ENCODE measurements at regions of chr6 and their contacts with region 1.

Region 1: DNA sequence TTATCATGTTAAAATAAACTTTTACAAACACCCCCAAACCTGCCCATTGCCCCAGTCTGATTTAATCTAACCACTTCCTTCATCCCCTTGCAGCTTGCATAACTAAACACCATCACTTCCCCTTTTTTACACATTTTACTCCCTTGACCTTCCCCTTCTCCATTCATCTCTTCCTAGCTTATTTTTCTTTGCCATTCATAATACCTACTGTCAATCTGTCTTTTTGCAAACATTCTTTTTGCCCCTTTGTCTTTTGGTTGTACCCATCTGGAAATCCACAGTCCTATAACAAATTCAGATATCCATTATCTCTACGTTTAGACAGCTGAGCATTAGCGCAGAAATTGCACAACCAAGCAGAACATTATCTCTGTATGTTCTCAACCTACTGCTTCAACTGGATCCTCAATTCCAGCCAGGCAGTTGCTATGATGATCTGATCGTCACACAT is 51.2 kb downstream of the C6orf52 start:
- H3K4me3 ChIP-seq: no peak overlapping the region
- H3K27ac ChIP-seq: no peak overlapping the region
- H3K4me1 ChIP-seq: no peaks in the 10 kb centered on the region
- CTCF ChIP-seq: no peak

Region 2: DNA sequence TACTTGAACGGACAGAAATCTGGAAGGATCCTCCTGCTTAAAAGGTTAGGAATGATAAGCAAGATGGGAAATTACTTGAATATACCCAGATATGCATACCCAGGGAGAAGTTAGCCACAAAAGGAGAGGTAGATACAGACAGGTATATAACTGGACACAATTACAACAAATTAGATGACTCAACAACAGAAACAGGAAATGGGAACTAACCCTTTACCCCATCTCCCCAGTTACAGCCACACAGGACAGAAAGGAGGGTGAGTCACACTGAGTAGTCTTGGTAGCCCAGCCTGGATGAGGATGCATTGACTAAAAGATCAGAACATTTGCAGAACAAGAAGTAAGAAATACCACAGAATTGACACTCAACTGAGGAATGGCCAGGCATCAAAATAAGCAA is 10.0 kb before region 1 on chr6:
- CTCF ChIA-PET with region 1: no interaction called
- POLR2A ChIA-PET with region 1: interaction called, 10 read pairs
- H3K4me3 ChIP-seq: no peak overlapping the region
- H3K27ac ChIP-seq: no peak overlapping the region
- H3K4me1 ChIP-seq: no peaks in the 10 kb centered on the region
- CTCF ChIP-seq: no peak

Measured in HEK293 (cell line).